ENCODE measurements at regions of chr19 and their contacts with region 1.

Region 1: DNA sequence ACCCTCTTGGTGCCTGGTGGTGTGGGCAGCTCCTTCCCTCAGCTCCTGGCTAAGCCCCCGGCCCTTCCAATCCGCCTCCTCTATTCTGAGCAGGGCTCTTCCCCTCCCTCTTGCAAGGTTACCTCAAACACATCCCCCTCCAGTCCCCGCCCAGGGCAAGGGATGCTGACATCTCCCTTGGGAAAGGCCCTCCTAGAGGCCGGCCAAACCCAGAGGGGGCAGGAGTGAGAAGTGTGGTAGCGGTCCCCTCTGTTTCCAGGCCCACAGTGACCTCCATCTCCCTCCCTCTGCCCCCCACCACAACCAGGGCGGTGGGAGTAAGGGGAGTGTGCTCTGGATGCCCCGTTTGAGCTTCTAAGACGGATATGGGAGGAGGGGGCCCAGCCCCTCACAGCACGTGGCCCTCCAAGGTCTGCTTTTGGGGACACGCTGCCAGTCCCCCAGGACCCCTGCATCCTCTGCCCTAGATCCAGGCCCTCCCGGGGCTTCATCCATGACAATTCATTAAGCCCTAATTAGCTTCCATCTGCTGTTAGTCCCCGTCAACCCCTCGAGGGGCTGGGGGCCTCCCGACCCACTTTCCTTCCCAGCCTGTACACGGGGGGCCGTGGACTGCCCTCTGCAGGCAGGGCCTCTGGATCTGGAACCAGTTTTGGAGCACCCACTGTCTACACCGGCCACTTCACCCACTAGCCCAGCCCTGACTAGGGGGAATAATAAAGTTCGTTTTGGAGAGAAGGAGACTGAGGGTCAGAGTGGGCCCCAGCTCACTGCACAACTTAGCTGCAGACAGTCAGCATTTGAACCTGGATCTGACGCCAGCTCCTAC is 2.3 kb downstream of the LINGO3 start:
- DNase-seq: no peak
- ATAC-seq: peak; percentile 3 to 9; a peak in 2 of 6 replicates
- H3K4me3 ChIP-seq: no peak overlapping the region
- H3K27ac ChIP-seq: no peak overlapping the region
- H3K4me1 ChIP-seq: peaks cover 10% of the 10 kb centered on the region; the same call in 2 of the 3 replicates
- CTCF ChIP-seq: no peak
- EP300 ChIP-seq: no peak
- POLR2A ChIP-seq: no peak
- RAD21 ChIP-seq: no peak

Region 2: DNA sequence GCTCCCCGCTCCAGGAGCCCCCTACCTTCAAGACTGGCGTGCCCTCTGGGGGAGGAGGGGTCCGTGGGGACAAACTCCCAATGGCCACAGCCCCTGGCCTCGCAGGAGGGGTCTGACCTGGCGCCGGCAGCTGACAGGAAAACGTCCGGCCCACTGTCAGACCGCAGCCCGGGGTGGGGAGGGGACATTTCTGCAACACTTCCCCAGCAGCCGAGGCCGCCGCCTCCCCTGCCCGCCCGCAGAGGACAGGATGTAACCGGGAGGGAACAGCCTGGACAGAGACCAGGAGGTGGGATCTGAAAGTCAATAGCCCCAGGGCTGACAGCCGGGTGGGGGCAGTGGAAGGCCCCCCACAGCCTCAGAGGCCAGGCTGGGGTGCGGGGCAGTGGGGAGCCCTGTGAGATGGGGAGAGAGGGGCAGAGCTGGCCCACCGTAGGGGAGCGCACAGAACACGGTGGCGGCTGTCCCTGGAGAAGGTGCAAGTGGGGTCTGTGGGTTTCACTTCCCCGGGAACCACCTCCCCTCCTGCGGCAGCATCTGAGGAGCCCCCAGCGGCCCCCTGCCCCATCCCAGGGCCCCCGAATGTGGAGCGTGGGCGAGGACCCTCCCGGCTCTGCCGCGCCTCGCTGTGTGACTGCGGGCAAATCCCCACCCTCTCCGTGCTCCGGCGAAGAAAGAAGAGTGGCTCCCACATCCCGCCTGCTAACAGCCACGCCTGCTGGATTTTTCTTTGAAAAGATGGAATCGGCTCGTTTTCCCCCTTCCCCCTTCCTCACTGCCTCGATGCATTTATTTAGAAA is 23.4 kb before region 1 on chr19 and contains the start of gene PEAK3:
- CTCF ChIA-PET with region 1: no interaction called
- POLR2A ChIA-PET with region 1: no interaction called
- DNase-seq: no peak
- ATAC-seq: 0 out of 6 replicates have a peak, but pooled peaks of 1 of the 2 experiments have one; percentile 17
- H3K4me3 ChIP-seq: no peak within 1 kb of the TSS
- H3K27ac ChIP-seq: no peak within 1 kb of the TSS
- H3K4me1 ChIP-seq: no peaks in the 10 kb centered on the region
- CTCF ChIP-seq: no peak
- EP300 ChIP-seq: no peak
- POLR2A ChIP-seq: no peak
- RAD21 ChIP-seq: no peak
- polyA plus RNA-seq, gene PEAK3: not detected in 2 replicates

Region 3: DNA sequence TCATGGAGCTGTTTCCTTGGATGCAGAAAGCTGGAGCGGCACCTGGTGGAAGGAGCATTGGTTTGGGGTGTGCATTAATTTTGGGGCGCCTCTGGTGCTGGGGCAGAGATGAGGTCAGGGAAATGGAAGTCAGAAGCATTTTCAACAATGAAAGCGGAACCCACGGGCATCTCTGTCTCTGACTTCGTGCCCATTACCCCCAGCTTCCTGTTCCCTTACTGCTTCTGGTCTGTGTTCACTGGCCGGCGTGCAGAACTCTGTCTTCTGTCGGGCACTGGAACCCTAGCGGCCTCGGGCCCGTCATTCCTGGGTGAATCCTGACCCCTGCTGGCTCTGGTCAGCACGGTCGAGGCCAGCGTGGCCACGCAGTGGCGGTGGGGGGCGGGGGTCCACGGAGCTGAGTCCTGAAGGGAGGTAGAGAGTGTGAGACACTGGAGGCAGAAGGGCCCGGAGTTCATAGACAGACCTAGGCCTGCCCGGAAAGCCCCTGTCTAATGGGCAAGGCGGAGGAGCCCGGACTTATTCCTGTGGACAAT is 10.2 kb after region 1 on chr19:
- CTCF ChIA-PET with region 1: interaction called, 12 read pairs
- POLR2A ChIA-PET with region 1: no interaction called
- DNase-seq: peak in 1 of 2 experiments; percentile 43
- ATAC-seq: peak; percentile 71 to 85
- H3K4me3 ChIP-seq: no peak overlapping the region
- H3K27ac ChIP-seq: no peak overlapping the region
- H3K4me1 ChIP-seq: no peaks in the 10 kb centered on the region
- CTCF ChIP-seq: peak; percentile 36; the same call in 2 of the 3 replicates
- EP300 ChIP-seq: no peak
- POLR2A ChIP-seq: no peak
- RAD21 ChIP-seq: peak; percentile 67 to 71